Caco-2 (cell line): ENCODE measurements at regions of chr18 and their contacts with region 1.

Region 1: DNA sequence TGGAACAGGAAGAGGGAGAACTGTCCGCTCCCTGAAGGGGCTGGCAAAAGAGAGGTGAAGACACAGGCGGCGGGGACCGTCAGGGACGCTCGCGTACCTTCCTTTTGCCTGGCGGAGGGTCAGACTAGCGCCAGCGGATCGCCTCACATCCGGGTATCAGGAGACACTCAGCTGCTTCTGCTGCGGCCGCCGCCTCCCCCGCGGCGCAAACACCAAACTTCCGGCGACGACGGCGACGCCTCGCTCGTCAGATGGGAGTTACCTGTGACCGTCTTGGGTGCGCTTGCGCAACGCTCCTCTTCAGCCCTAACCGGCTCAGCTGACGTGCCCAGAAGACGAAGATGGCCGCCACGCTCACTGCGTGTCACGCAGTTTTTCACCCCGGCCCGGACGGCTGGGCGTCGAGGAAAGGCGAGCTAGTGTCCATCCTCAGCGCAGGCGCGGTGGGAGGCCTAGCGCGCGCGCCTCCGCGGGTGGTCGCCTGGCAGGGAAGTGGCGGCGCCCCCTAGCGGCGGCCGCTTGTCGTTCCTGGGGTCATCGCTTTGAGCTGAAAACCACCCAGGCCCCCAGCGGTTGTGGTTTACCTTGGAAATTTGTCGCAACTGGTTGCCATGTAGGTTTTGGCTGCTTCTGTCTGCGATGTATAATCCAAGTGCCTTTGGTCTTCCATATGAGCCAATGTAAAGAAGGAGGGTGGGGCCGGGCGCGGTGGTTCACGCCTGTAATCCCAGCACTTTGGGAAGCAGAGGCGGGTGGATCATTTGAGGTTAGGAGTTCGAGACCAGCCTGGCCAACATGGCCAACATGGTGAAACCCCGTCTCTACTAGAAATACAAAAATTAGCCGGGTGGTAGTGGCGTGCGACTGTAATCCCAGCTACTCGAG is at the start of gene ESCO1:
- DNase-seq: peak; percentile 98 to 99
- H3K4me3 ChIP-seq: peak within 1 kb of the TSS; percentile 72
- H3K4me3 Mint-ChIP-seq: peak within 1 kb of the TSS; percentile 96
- H3K27ac Mint-ChIP-seq: peak within 1 kb of the TSS; percentile 99
- H3K4me1 ChIP-seq: peaks cover 4% of the 10 kb centered on the region; the same call in 1 of the 2 replicates
- H3K4me1 Mint-ChIP-seq: peaks cover 6% of the 10 kb centered on the region
- H3K27me3 ChIP-seq: no peaks in the 10 kb centered on the region
- H3K27me3 Mint-ChIP-seq: no peaks in the 10 kb centered on the region
- CTCF ChIP-seq: peak; percentile 85 to 93
- total RNA-seq, gene ESCO1: 23.0 and 24.2 TPM in 2 replicates

Region 2: GRCh38 chr18:21191596-21192307 is 409.0 kb before region 1 on chr18:
- CTCF ChIA-PET with region 1: interaction called, 8 read pairs
- POLR2A ChIA-PET with region 1: no interaction called
- intact Hi-C with region 1: loop called (anchors 2 kb)
- DNase-seq: peak; percentile 75 to 77
- H3K4me3 ChIP-seq: no peak overlapping the region
- H3K4me3 Mint-ChIP-seq: no peak overlapping the region
- H3K27ac Mint-ChIP-seq: no peak overlapping the region
- H3K4me1 ChIP-seq: no peaks in the 10 kb centered on the region
- H3K4me1 Mint-ChIP-seq: peaks cover 13% of the 10 kb centered on the region
- H3K27me3 ChIP-seq: no peaks in the 10 kb centered on the region
- H3K27me3 Mint-ChIP-seq: no peaks in the 10 kb centered on the region
- CTCF ChIP-seq: peak; percentile 83 to 85

Region 3: GRCh38 chr18:21330122-21330701 is 270.6 kb before region 1 on chr18:
- CTCF ChIA-PET with region 1: no interaction called
- POLR2A ChIA-PET with region 1: no interaction called
- intact Hi-C with region 1: no loop called
- DNase-seq: peak; percentile 45 to 63
- H3K4me3 ChIP-seq: no peak overlapping the region
- H3K4me3 Mint-ChIP-seq: peak overlapping the region; percentile 53
- H3K27ac Mint-ChIP-seq: peak overlapping the region; percentile 69
- H3K4me1 ChIP-seq: peaks cover 46% of the 10 kb centered on the region
- H3K4me1 Mint-ChIP-seq: peaks cover 42% of the 10 kb centered on the region
- H3K27me3 ChIP-seq: no peaks in the 10 kb centered on the region
- H3K27me3 Mint-ChIP-seq: no peaks in the 10 kb centered on the region
- CTCF ChIP-seq: no peak

Region 4: DNA sequence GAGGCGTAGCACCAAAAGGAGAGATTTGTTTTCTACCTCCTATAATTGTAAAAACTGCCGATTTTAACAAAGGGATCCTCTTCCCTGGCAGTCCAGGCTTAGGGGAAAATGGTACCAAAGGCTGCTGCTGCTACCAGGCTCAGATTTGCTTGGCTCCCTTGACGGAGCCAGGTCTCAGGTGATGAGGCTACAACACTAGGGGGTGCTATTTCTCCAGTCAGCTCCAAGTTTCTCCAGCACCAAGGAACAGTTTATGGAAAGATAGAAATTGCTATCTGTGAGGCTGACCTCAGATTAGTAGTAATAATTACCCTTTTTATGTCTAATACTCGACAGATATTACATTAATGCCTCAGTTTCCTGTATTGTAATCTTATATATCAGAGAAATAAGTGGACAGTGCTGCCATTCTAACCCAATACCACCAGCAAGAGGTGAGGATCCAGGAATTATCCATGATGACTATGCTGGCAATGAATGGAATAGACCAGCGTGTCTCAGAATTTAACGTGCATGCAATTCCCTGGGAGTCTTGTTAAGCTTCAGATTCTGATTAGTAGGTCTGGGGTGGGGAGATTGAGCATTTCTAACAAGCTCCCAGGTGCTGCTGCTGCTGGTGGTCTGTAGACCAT is 111.5 kb before region 1 on chr18:
- CTCF ChIA-PET with region 1: interaction called, 6 read pairs
- POLR2A ChIA-PET with region 1: no interaction called
- intact Hi-C with region 1: loop called (anchors 10 kb)
- DNase-seq: peak in 1 of 2 experiments; percentile 57
- H3K4me3 ChIP-seq: no peak overlapping the region
- H3K4me3 Mint-ChIP-seq: no peak overlapping the region
- H3K27ac Mint-ChIP-seq: no peak overlapping the region
- H3K4me1 ChIP-seq: no peaks in the 10 kb centered on the region
- H3K4me1 Mint-ChIP-seq: no peaks in the 10 kb centered on the region
- H3K27me3 ChIP-seq: no peaks in the 10 kb centered on the region
- H3K27me3 Mint-ChIP-seq: no peaks in the 10 kb centered on the region
- CTCF ChIP-seq: peak; percentile 34 to 78

Region 5: GRCh38 chr18:21612125-21612991 is 11.6 kb after region 1 on chr18 and contains the start of gene SNRPD1:
- CTCF ChIA-PET with region 1: interaction called, 32 read pairs
- POLR2A ChIA-PET with region 1: interaction called, 3 read pairs
- intact Hi-C with region 1: loop called (anchors 1 kb)
- DNase-seq: peak; percentile 89 to 94
- H3K4me3 ChIP-seq: peak within 1 kb of the TSS; percentile 77
- H3K4me3 Mint-ChIP-seq: peak within 1 kb of the TSS; percentile 90
- H3K27ac Mint-ChIP-seq: peak within 1 kb of the TSS; percentile 96
- H3K4me1 ChIP-seq: 0 out of 2 replicates have a peak, but pooled peaks cover 4% of the 10 kb centered on the region
- H3K4me1 Mint-ChIP-seq: peaks cover 7% of the 10 kb centered on the region
- H3K27me3 ChIP-seq: no peaks in the 10 kb centered on the region
- H3K27me3 Mint-ChIP-seq: no peaks in the 10 kb centered on the region
- CTCF ChIP-seq: peak; percentile 80 to 92
- total RNA-seq, gene SNRPD1: 129 and 134 TPM in 2 replicates

Region 6: GRCh38 chr18:21740724-21741510 is 140.1 kb after region 1 on chr18 and contains the start of gene MIB1:
- CTCF ChIA-PET with region 1: interaction called, 12 read pairs
- POLR2A ChIA-PET with region 1: interaction called, 15 read pairs
- intact Hi-C with region 1: loop called (anchors 2 kb)
- DNase-seq: peak in 1 of 2 experiments; percentile 56
- H3K4me3 ChIP-seq: peak within 1 kb of the TSS; percentile 99
- H3K4me3 Mint-ChIP-seq: peak within 1 kb of the TSS; percentile 89
- H3K27ac Mint-ChIP-seq: peak within 1 kb of the TSS; percentile 95
- H3K4me1 ChIP-seq: peaks cover 6% of the 10 kb centered on the region; the same call in 1 of the 2 replicates
- H3K4me1 Mint-ChIP-seq: peaks cover 14% of the 10 kb centered on the region
- H3K27me3 ChIP-seq: no peaks in the 10 kb centered on the region
- H3K27me3 Mint-ChIP-seq: no peaks in the 10 kb centered on the region
- CTCF ChIP-seq: no peak
- total RNA-seq, gene MIB1: 43.2 and 48.1 TPM in 2 replicates

Region 7: GRCh38 chr18:21914739-21915319 is 314.1 kb after region 1 on chr18:
- CTCF ChIA-PET with region 1: no interaction called
- POLR2A ChIA-PET with region 1: no interaction called
- intact Hi-C with region 1: no loop called
- DNase-seq: peak; percentile 69 to 73
- H3K4me3 ChIP-seq: no peak overlapping the region
- H3K4me3 Mint-ChIP-seq: no peak overlapping the region
- H3K27ac Mint-ChIP-seq: no peak overlapping the region
- H3K4me1 ChIP-seq: peaks cover 29% of the 10 kb centered on the region
- H3K4me1 Mint-ChIP-seq: peaks cover 24% of the 10 kb centered on the region
- H3K27me3 ChIP-seq: no peaks in the 10 kb centered on the region
- H3K27me3 Mint-ChIP-seq: no peaks in the 10 kb centered on the region
- CTCF ChIP-seq: peak; percentile 78 to 84